ENCODE measurements at regions of chr2 and their contacts with region 1.

Region 1: DNA sequence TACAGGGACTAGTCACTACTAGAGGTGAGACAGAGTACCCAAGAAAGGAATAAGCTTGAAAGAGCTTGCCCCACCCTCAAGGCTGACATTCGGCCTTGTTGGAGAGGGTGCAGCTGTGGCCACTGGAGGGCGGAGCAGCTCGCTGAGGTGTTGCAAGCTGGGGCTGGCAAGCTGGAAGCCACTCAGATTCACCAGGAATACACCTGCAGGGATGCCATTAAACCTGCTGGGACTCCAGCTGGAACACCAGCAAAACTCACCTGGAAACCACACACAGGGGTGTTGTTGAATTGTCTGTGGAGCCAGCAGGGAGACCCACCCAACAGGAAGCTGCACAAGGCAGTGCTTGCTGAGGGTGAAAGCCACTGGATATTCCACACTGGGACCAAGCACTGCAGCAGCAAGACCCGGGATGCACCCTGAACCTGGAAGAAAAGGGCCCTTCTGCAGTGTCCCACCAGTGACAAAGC is 26.1 kb downstream of the KCTD18 start:
- DNase-seq: peak; percentile 53
- H3K27ac ChIP-seq: no peak overlapping the region
- CTCF ChIP-seq: peak; percentile 63

Region 2: DNA sequence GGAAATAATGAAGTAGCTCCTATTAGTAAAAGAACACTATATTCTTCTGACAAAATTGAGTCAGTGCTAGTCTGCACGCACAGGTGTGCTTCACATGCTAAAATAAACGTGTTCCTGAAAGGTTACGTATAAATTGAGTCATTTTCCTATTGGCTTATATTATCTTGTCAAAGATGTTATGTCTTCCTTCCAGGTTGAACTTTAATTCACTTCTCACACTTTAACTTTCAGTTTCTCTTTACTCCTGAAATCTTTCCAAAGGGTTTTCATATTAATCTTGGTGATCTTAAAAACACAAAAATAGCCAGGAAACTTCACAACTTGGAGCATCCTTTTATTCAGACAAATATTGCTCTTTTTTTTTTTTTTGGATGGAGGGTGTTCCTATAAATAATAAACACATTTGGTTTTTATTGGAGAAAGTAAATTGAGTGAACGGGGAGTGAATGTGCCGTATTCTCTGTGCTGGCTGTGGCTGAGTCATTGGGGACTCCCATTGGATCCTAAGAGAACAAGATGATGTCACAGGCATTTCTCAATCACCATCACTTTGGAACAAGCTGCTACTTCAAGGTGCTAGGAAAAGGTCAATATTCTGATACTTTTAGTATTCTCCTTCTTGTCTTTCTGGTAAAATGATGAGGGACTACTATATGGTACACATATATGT is 327.5 kb before region 1 on chr2:
- CTCF ChIA-PET with region 1: no interaction called
- POLR2A ChIA-PET with region 1: no interaction called
- DNase-seq: peak; percentile 82
- H3K27ac ChIP-seq: no peak overlapping the region
- CTCF ChIP-seq: no peak

Region 3: GRCh38 chr2:200703127-200703925 is 219.6 kb after region 1 on chr2:
- CTCF ChIA-PET with region 1: interaction called, 12 read pairs
- POLR2A ChIA-PET with region 1: no interaction called
- DNase-seq: peak; percentile 46
- H3K27ac ChIP-seq: no peak overlapping the region
- CTCF ChIP-seq: peak; percentile 49